HEK293T (cell line): ENCODE measurements at regions of chr17 and their contacts with region 1.

Region 1: GRCh38 chr17:74491321-74492054 is 25.1 kb downstream of the CD300A start:
- DNase-seq: no peak

Region 2: GRCh38 chr17:74360899-74361229 is 130.6 kb before region 1 on chr17:
- CTCF ChIA-PET with region 1: no interaction called
- POLR2A ChIA-PET with region 1: no interaction called
- DNase-seq: no peak

Region 3: DNA sequence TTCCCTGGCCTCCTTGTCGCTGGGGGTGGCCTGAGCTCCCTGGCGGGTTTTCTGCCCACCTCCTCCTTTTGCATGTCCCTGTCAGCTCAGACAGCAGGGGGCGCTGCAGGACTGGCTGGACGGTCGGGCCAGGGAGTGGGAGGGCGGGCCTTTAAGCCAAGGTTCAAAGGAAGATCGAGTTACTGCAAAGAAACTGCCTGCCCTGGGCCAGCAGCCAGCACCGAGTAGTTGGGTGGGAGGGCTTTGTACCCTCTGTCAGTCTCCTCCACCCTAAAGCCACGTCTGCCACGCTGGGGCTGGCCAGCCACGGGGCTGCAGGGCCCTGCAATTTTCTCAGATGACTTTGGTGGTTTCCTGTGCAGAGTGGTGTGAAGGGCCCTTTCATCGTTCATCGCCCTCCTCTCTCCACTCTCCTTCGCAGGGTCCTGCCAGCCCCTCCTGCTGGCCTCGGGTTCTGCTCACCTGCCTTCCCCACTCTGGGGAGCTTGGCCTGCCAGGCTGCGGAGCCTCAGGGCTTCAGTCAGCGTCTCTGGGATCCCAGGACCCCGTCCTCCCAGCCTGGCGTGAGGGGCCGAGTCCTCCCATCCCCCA is 111.9 kb before region 1 on chr17:
- CTCF ChIA-PET with region 1: interaction called, 12 read pairs
- POLR2A ChIA-PET with region 1: no interaction called
- DNase-seq: peak; percentile 94

Region 4: DNA sequence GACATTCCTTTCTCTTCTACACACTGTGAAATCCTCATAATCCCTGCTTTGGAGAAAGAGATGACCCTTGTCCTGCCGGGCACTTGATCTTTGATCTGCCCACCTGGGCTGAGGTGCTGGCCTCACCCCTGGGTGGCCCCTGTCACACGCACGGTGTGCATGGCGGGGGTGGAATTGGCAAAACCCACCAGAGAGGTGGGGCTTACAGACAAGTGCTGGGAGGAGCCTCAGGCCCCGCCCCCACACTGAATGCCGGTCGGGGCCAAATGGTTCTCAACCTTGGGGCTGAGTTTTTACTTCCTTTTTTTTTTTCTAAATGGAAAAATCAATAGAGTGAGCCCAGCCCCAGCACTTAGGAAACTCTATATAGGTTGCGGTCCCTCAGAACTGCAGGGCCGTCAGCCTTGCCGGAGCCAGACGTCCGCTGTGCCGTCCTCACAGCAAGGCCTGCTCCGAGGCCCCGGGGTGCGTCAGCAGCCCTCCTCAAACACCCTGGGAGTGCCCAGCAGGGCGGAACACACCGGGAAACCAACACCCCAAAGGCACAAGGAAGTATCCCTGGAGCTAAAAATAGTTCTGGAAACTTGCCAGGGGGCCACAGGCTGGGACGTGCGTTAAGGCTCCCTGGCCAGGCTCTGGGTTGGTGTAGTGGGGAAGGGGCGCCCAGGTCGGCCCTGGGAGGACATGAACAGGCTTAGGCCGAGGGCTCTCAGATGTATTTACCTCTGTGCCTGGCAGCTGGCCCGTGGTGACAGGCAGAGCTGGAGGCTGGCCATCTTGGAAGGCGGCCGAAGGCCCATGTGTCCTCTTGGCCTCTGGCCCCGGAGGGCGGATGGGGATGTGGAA is 48.6 kb before region 1 on chr17:
- CTCF ChIA-PET with region 1: no interaction called
- POLR2A ChIA-PET with region 1: no interaction called
- DNase-seq: peak; percentile 73

Region 5: GRCh38 chr17:74466828-74467184 is 24.7 kb before region 1 on chr17:
- CTCF ChIA-PET with region 1: no interaction called
- POLR2A ChIA-PET with region 1: no interaction called
- DNase-seq: no peak

Region 6: DNA sequence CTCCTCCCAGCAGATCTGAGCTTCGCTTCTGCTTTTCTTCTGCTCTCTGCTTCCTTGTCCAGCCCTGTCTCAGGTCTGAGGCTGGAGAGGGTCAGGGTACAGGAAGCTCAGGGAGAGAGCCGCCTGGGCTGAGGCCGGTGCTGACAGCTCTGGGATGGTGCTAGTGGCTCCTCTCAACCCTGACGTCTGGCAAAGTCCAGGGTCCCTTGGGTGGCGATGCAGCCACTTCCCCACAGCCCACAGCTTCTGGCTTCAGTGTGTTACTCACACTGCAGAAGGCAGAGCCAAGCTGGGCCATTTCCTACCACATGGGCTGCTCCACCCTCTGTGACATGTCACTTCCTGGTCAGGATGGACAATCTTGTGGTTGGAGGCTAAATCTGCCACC is 54.3 kb after region 1 on chr17 and contains the start of gene CD300C:
- CTCF ChIA-PET with region 1: no interaction called
- POLR2A ChIA-PET with region 1: no interaction called
- DNase-seq: no peak